Heart left ventricle (tissue), 16 donors: ENCODE measurements at regions of chr11 and their contacts with region 1.

Region 1: DNA sequence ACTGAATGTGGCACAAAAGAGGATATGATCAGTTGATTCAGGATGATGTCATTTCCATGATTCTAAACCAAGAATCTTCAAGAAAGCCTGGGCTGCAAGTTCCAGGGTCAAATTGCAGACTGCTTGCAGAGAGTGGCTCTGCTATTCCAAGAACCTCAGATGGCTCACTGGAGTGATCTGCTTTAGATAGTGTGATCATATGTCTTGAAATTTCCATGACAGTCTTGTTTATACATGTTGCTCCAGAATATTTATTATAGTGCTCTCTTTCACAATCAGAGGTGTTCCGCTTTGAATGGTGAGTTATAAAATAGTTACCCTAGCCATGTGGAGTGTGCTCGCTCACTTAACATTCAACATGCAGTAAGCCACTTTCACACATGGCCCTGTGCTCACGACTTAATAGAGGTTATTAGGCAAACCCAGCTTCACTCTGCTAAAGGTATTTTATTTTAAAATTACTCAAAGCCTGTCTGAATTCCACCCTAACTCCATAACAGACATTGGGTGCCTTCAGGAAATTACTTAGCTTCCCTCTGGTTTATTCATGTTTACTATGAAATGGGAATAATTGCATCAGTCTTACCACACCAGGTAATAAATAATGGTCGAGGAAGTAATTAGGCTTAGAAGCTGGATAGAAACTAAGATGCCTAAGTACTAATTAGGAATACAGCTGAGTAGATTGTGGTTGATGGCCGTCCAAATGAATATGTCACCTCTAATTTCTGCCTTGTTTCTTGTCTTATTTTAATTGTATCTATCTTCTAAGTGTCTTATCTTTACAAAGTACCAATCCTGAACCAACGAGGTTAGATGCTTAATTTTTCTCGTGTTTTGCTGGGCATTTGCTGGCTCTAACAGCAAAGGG is 187.9 kb downstream of the ETS1 start:
- DNase-seq: no peak
- ATAC-seq: no peak
- H3K4me3 ChIP-seq: no peak overlapping the region
- H3K27ac ChIP-seq: no peak overlapping the region
- H3K4me1 ChIP-seq: peaks cover 0 to 11% (median 1%) of the 10 kb centered on the region in 12 donors
- H3K27me3 ChIP-seq: no peaks in the 10 kb centered on the region
- CTCF ChIP-seq: no peak
- POLR2A ChIP-seq: no peak

Region 2: GRCh38 chr11:128359515-128359914 is 40.0 kb before region 1 on chr11:
- intact Hi-C with region 1: loop called in 1 of 10 experiments (anchors 5 kb)
- DNase-seq: no peak
- ATAC-seq: peak in 2 of 4 donors; percentile 38 to 49
- H3K4me3 ChIP-seq: no peak overlapping the region
- H3K27ac ChIP-seq: no peak overlapping the region
- H3K4me1 ChIP-seq: peaks cover 0 to 18% (median 1%) of the 10 kb centered on the region in 12 donors
- H3K27me3 ChIP-seq: no peaks in the 10 kb centered on the region
- CTCF ChIP-seq: no peak
- POLR2A ChIP-seq: no peak

Region 3: DNA sequence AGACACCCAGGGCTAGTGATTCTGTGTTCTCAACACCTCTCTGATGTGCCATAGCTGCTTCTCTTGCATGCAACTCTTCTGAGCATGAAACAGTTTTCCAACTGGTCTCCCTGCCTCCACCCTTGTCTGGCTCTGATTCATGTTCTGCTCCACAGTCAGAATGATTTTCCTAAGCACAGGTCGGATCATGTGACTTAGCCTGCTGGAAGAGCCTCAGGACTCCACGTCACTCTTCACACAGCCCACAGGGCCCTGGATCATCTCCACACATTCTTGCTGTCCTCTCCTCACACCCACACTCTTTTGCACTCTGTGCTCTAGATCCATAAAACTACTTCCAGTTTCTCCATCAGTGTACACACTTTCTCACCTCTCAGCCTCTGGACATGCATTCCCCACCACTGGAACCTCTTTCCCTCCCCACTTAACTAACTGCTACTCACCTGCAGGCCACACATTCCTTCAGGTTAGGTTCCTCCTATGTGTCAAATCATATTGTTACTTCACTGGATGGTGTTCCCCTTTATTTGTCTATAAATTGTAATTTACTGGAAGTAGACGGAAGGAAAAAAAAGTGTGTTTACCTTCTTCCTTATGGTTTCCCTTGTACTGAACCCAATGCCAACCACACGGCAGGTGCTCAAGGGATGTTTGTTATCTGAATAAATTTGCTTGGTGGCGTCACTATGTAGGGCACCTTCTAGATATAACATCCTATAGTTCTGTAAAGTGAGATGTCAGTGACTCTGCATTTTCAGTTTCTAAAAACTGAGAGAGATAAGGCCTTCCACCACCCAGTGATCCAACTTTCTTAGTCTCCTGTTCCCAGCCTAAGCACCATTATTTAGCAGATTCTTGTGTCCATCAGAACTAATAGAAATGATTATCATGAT is 54.2 kb after region 1 on chr11:
- intact Hi-C with region 1: loop called in 1 of 10 experiments (anchors 10 kb)
- DNase-seq: peak in 4 of 5 donors; percentile 61 to 76 (median 69)
- ATAC-seq: peak; percentile 53 to 85 (median 76)
- H3K4me3 ChIP-seq: no peak overlapping the region
- H3K27ac ChIP-seq: peak overlapping the region in 5 of 12 donors; percentile 4 to 56 (median 39)
- H3K4me1 ChIP-seq: peaks cover 3 to 66% (median 33%) of the 10 kb centered on the region in 12 donors
- H3K27me3 ChIP-seq: no peaks in the 10 kb centered on the region
- CTCF ChIP-seq: no peak
- POLR2A ChIP-seq: no peak